Mammary epithelial cell (primary cell): ENCODE measurements at regions of chr7 and their contacts with region 1.

Region 1: GRCh38 chr7:21617916-21618390 is 75.1 kb downstream of the DNAH11 start:
- DNase-seq: peak; percentile 78
- H3K4me3 ChIP-seq: no peak overlapping the region
- H3K27ac ChIP-seq: no peak overlapping the region
- H3K4me1 ChIP-seq: peaks cover 23% of the 10 kb centered on the region
- H3K27me3 ChIP-seq: no peaks in the 10 kb centered on the region
- CTCF ChIP-seq: no peak

Region 2: GRCh38 chr7:21580073-21580521 is 37.9 kb before region 1 on chr7:
- CTCF ChIA-PET with region 1: no interaction called
- dilution Hi-C with region 1: no loop called
- in situ Hi-C with region 1: no loop called
- intact Hi-C with region 1: loop called (anchors 2 kb)
- DNase-seq: peak; percentile 90
- H3K4me3 ChIP-seq: no peak overlapping the region
- H3K27ac ChIP-seq: peak overlapping the region; percentile 70
- H3K4me1 ChIP-seq: peaks cover 16% of the 10 kb centered on the region
- H3K27me3 ChIP-seq: no peaks in the 10 kb centered on the region
- CTCF ChIP-seq: no peak